Panc1 (cell line): ENCODE measurements at regions of chr3 and their contacts with region 1.

Region 1: GRCh38 chr3:15223685-15224572 is 17.9 kb downstream of the CAPN7 start:
- DNase-seq: no peak
- ATAC-seq: no peak
- H3K4me3 ChIP-seq: no peak overlapping the region
- H3K27ac ChIP-seq: no peak overlapping the region
- H3K4me1 ChIP-seq: no peaks in the 10 kb centered on the region
- H3K27me3 ChIP-seq: no peaks in the 10 kb centered on the region
- CTCF ChIP-seq: no peak

Region 2: DNA sequence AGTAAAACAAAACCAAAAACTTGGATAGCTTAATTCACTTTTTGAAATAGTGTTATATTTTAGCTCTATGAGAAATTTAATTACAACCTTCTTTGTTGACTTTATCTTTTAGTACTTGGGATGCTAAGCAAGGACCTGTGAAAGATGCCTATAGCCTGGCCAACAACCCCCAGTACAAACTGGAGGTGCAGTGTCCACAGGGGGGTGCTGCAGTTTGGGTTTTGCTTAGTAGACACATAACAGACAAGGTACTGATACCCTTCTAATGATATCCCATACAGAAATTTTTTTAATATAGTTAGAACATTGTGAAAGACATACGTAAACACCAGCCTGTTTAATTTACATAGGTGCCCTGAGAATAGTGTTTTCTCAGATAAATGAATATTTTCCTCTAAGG is 17.4 kb after region 1 on chr3:
- CTCF ChIA-PET with region 1: no interaction called
- POLR2A ChIA-PET with region 1: interaction called, 10 read pairs
- in situ Hi-C with region 1: no loop called
- intact Hi-C with region 1: no loop called
- DNase-seq: no peak
- ATAC-seq: no peak
- H3K4me3 ChIP-seq: no peak overlapping the region
- H3K27ac ChIP-seq: no peak overlapping the region
- H3K4me1 ChIP-seq: no peaks in the 10 kb centered on the region
- H3K27me3 ChIP-seq: no peaks in the 10 kb centered on the region
- CTCF ChIP-seq: peak; percentile 34

Region 3: DNA sequence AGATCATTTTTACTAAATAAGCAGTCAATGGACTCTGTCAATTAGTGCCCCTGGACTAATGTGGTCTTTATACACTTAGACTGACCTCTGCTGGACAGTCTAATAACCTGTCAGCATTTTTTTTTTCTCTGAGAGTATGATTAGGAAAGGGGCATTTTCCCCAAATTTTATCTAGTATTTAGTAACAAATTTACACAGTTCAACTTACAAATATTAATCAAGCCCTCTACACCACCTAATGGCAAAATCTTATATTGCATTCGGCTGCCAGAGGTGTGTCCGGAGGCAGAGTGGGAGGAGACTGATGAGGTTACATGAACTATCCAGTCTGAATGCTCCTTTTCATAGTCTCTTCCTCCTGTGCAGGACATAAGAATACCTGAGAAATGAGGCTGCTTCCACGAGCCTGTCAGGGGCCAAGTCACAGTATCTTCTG is 333.6 kb after region 1 on chr3:
- CTCF ChIA-PET with region 1: interaction called, 10 read pairs
- POLR2A ChIA-PET with region 1: no interaction called
- in situ Hi-C with region 1: no loop called
- intact Hi-C with region 1: no loop called
- DNase-seq: peak; percentile 57
- ATAC-seq: peak; percentile 96
- H3K4me3 ChIP-seq: no peak overlapping the region
- H3K27ac ChIP-seq: no peak overlapping the region
- H3K4me1 ChIP-seq: no peaks in the 10 kb centered on the region; the same call in 1 of the 2 replicates
- H3K27me3 ChIP-seq: no peaks in the 10 kb centered on the region
- CTCF ChIP-seq: peak; percentile 68